CD14-positive monocyte (primary cell): ENCODE measurements at regions of chr6 and their contacts with region 1.

Region 1: GRCh38 chr6:75266716-75267291 is 17.8 kb downstream of the TMEM30A start:
- DNase-seq: peak in 2 of 3 donors; percentile 40 to 63
- H3K4me3 ChIP-seq: no peak overlapping the region
- H3K4me3 Mint-ChIP-seq: no peak overlapping the region
- H3K27ac ChIP-seq: no peak overlapping the region
- H3K27ac Mint-ChIP-seq: no peak overlapping the region
- H3K4me1 ChIP-seq: peaks cover 4 to 5% of the 10 kb centered on the region in 2 donors
- H3K4me1 Mint-ChIP-seq: peaks cover 9% of the 10 kb centered on the region
- H3K27me3 ChIP-seq: no peaks in the 10 kb centered on the region
- H3K27me3 Mint-ChIP-seq: no peaks in the 10 kb centered on the region
- CTCF ChIP-seq: peak; percentile 83

Region 2: DNA sequence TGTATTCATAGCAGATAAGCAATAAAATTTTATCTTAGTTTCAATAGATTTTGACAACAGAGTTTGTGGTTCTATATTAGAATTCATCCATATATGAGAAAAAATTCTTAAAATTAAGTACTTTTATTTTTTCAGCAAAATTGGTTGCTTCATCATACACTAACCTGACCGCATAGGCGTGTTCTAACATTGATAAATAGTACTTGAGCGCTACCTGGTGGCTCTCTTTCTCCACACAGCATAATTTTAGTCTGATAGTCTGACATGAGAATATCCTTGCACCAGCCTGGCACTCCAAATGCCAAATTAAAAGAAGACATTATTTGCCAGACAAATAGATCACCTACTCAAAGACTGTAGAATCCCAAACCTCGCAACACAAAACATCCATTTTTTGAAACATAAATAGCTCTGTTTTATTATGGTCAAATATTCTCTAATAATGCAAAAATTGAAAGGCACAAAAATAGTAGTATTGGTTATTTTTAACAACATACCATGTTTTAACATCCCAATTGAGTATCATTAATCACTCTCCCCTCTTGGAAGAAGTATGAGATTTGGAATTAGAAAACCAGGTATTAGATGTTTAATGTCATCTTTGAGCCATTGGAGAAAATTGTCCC is 259.8 kb after region 1 on chr6:
- intact Hi-C with region 1: loop called (anchors 5 kb)
- DNase-seq: peak; percentile 29 to 48 (median 45)
- H3K4me3 ChIP-seq: no peak overlapping the region
- H3K4me3 Mint-ChIP-seq: no peak overlapping the region
- H3K27ac ChIP-seq: no peak overlapping the region
- H3K27ac Mint-ChIP-seq: no peak overlapping the region
- H3K4me1 ChIP-seq: no peaks in the 10 kb centered on the region
- H3K4me1 Mint-ChIP-seq: peaks cover 2% of the 10 kb centered on the region
- H3K27me3 ChIP-seq: peaks cover 2 to 5% of the 10 kb centered on the region in 2 donors
- H3K27me3 Mint-ChIP-seq: peaks cover 3 to 9% (median 5%) of the 10 kb centered on the region in 3 donors
- CTCF ChIP-seq: peak; percentile 71